HEK293T (cell line): ENCODE measurements at regions of chr4 and their contacts with region 1.

Region 1: DNA sequence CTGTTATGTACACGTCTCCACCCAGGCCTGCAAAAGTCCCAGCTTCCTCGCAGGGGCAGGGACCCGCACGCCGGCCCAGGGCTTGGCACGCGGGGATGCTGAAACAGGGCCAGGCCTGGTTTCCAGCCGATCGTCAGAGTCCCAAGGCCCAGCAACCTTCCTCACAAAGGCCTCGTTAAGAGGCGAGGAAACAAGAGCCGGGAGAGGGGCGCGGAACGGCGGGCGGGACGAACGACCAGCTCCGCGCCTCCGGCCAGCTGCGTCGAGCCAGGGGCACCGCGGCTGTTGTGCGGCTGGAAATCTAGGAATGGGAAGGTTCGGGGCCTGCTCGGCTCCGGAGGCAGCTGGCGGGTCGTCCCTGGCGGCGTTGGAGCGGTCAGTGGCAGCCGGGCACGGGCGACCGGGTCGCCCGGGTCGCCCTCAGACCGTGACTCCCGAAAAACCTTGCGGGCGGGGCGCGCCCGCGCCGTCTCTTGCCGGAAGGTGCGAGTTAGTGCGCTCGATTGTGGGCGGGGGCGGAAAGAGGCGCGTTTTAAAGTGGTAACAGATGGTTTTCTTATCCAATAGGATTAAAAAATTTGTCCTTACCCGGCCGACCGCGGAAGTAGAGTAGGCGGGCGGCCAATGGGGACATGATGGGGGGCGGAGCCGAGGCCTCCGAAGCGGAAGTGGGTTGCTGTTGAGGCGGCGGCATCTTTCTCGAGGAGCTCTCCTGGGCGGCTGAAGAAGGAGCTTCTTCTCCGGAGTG is at the start of gene RNF4:
- DNase-seq: peak; percentile 98

Region 2: DNA sequence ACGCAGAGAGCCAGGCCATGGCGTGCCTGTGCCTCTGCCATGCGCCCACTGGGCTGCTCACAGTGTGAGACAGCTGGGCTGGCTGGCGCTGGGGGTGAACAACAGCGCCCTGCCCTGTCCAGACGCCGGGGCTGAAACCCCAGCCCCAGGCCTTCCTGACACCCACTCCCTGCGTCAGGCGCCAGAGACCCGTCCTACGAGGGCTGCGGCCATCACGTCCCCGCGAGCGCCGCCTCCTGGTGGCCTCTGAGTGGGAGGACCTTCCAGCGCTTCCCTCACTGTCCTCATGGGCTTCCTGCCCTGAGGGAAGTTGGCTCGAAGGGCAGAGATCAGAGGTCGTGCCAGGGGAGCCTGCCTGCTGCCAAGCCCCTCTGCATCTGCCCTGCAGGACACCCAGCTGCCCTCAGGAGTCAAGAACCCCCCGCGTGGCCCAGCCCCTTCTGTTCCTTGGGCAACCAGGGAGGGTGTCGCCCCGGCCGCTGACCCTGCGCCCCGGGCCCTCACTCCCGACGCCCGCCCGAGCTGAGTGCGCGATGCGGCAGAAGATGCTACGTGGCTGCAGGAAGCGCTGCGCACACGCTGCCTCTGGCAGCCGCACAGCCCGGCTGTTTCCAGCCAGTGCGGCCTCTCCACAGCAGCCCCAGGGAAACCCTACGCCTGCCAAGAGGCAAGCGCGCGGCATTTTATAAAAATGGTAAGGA is 476.0 kb before region 1 on chr4:
- CTCF ChIA-PET with region 1: no interaction called
- POLR2A ChIA-PET with region 1: no interaction called
- DNase-seq: no peak

Region 3: DNA sequence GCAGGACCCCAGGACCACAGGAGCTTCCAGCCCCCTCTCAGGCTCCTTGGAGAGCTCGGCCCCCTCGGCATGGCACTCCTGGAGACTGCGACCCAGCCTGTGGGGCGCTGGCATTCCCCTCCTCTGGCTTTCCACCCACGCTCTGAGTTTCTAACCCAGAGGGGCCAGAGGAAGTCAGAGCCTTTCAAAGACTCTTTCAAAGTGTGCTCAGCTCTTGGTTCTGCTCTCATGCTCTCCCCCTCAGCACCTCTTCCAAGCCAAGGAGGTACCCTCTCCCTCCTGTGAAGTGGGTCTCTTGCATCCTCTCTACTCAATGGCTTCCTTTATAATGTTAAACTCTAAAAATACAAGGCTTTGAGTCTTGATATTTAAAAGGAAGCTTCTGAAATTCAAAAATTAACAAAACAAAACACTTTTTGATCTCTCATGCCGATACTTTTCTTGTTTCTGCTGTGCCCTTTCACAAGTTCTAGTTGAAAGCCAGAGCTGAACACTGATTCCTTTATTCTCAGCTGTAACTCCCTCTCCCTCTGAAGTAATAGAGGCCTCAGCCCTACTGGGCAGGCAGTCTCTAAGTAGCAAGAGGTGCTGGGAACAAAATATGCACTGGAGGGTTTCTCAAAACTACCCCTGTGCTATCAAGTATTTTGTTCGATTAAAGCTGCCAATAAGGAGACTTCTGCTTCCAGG is 326.7 kb before region 1 on chr4:
- CTCF ChIA-PET with region 1: no interaction called
- POLR2A ChIA-PET with region 1: no interaction called
- DNase-seq: no peak

Region 4: DNA sequence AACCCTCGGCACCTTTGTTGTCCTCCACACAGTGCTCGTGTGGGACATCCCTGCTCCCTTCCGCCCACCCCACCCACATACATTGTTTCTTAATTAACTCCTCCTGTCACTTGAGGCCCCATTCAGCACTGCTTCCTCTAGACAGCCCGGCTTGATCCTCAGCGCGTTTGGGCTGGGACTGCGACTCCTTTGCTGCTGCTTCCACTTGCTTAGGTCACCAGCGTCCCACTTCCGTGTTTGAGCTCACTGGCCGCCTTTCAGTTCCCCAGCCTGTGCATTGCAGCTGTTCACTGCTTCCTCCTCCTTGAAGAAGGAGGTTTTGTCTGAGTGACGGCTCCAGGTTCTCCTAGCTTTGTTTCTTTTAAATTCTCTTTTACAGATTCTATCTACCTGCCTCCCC is 16.4 kb after region 1 on chr4:
- CTCF ChIA-PET with region 1: no interaction called
- POLR2A ChIA-PET with region 1: interaction called, 12 read pairs
- DNase-seq: no peak

Region 5: DNA sequence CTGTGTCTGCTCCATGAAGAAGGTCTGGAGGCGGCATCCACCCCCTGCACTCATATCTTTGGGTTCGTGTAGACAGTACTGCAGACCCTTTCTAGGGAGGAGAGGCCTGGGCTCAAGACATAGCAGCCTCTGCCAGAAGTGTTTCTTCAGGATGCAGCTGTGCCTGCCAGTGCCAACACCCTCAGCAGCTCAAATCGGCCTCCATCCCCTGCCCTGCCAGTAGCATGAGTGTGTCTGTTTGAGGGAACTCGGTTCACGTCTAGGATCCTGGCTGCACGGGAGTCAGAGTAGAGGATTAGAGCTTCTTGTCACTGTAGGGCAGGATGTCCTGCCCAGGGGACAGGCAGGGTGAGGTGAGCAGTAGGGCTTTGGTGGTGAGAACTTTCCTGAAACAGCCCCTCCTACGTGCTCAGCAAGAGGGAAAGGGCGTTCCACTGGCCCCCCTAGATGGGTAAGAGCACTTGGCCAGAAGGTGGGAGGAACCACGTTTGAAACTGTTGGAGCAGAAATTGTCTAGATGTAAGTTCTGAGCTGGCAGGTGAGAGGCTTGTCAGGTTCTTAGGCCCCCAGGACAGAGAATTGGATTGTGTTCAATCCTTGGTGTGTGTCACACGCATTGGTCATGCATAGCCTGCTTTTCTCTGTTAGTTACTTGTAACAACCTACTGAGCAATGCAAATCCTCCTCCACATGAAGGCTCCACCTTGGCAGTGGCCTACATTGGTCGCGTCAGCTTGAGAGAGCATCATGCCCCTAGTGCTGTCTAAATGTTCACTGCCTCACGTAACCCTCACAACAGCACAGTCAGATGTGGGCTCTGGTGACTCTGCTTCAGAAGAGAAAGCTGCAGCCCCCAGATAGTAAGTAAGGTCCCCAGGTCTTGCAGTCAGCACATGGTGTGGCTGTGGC is 42.0 kb after region 1 on chr4:
- CTCF ChIA-PET with region 1: no interaction called
- POLR2A ChIA-PET with region 1: interaction called, 10 read pairs
- DNase-seq: no peak

Region 6: GRCh38 chr4:2536193-2537010 is 67.8 kb after region 1 on chr4 and contains the start of gene FAM193A:
- CTCF ChIA-PET with region 1: no interaction called
- POLR2A ChIA-PET with region 1: interaction called, 21 read pairs
- DNase-seq: peak; percentile 97